ENCODE measurements at regions of chr7 and their contacts with region 1.

Region 1: GRCh38 chr7:39594988-39595620 is 28.3 kb upstream of the RALA start:
- DNase-seq: no peak
- ATAC-seq: no peak
- H3K4me3 ChIP-seq: no peak overlapping the region
- H3K4me3 Mint-ChIP-seq: no peak overlapping the region
- H3K27ac ChIP-seq: no peak overlapping the region
- H3K27ac Mint-ChIP-seq: no peak overlapping the region
- H3K4me1 ChIP-seq: peaks cover 0 to 2% of the 10 kb centered on the region in 2 experiments
- H3K4me1 Mint-ChIP-seq: peaks cover 7 to 39% (median 34%) of the 10 kb centered on the region in 3 donors
- H3K27me3 ChIP-seq: no peaks in the 10 kb centered on the region
- H3K27me3 Mint-ChIP-seq: no peaks in the 10 kb centered on the region

Region 2: GRCh38 chr7:40000734-40001315 is 405.7 kb after region 1 on chr7:
- CTCF ChIA-PET with region 1: no interaction called
- POLR2A ChIA-PET with region 1: interaction called in 1 of 2 experiments, 16 read pairs
- DNase-seq: no peak
- ATAC-seq: no peak
- H3K4me3 ChIP-seq: no peak overlapping the region
- H3K4me3 Mint-ChIP-seq: no peak overlapping the region
- H3K27ac ChIP-seq: no peak overlapping the region
- H3K27ac Mint-ChIP-seq: no peak overlapping the region
- H3K4me1 ChIP-seq: no peaks in the 10 kb centered on the region
- H3K4me1 Mint-ChIP-seq: peaks cover 2 to 17% (median 7%) of the 10 kb centered on the region in 3 donors
- H3K27me3 ChIP-seq: no peaks in the 10 kb centered on the region
- H3K27me3 Mint-ChIP-seq: no peaks in the 10 kb centered on the region

Region 3: DNA sequence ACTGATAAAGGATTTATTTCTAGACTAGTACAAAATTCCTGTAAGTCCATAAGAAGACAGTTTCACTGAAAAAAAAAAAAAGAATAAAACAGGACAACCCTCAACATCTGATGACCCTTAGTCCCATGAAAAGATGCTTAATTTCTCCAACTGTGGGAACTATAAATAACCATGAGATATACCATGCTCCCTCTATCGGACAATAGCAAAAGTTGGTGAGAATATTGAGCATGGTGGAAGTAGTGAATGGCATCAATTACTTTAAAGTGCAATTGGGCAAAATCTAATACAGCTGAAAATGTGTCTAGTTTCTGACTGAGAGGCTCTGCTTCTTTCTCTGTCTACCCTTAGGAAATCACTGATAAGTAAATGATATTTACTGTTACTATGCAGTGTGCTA is 888.5 kb after region 1 on chr7:
- CTCF ChIA-PET with region 1: no interaction called
- POLR2A ChIA-PET with region 1: no interaction called
- DNase-seq: no peak
- ATAC-seq: no peak
- H3K4me3 ChIP-seq: no peak overlapping the region
- H3K4me3 Mint-ChIP-seq: no peak overlapping the region
- H3K27ac ChIP-seq: no peak overlapping the region
- H3K27ac Mint-ChIP-seq: no peak overlapping the region
- H3K4me1 ChIP-seq: no peaks in the 10 kb centered on the region
- H3K4me1 Mint-ChIP-seq: no peaks in the 10 kb centered on the region
- H3K27me3 ChIP-seq: no peaks in the 10 kb centered on the region
- H3K27me3 Mint-ChIP-seq: no peaks in the 10 kb centered on the region

Region 4: DNA sequence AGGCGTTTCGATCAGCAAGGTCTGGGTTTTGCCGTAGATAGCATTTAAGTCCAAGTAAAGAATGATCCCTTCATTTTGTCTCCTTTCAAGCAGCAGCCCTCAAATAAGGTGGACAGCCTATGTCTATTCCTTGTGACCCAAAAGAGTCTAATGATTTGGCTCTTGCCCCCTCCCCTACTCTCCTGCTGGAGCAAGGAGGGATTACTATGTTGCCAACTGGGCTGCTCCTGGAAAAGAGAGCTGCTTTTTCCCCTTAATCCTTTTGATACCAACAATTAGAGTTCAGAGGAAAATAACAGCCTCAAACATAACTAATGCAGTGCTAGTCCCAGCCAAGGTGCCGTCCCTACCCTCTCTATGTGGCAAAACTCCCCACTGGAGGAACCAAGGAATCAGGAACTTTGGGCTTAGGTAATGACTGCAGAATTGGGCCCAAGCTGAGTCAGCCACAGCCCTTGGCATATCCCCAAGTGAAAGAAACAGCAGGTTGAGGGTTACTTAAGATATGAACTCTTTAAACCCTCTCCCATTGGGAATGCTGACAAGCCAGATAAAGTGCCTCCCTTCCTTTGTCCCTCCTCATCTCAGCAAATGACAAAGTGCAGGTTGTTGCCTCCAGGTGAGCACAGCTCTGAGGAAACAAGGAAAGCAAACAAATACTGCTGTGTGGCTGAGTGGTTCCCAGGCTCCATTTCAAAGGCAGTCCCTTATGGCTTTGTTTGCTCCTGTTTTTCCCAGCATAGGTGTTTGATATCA is 1464.1 kb after region 1 on chr7:
- CTCF ChIA-PET with region 1: no interaction called
- POLR2A ChIA-PET with region 1: no interaction called
- DNase-seq: no peak
- ATAC-seq: no peak
- H3K4me3 ChIP-seq: no peak overlapping the region
- H3K4me3 Mint-ChIP-seq: no peak overlapping the region
- H3K27ac ChIP-seq: no peak overlapping the region
- H3K27ac Mint-ChIP-seq: no peak overlapping the region
- H3K4me1 ChIP-seq: no peaks in the 10 kb centered on the region
- H3K4me1 Mint-ChIP-seq: no peaks in the 10 kb centered on the region
- H3K27me3 ChIP-seq: no peaks in the 10 kb centered on the region
- H3K27me3 Mint-ChIP-seq: no peaks in the 10 kb centered on the region